Posterior vena cava (tissue), 2 donors: ENCODE measurements at regions of chr15 and their contacts with region 1.

Region 1: DNA sequence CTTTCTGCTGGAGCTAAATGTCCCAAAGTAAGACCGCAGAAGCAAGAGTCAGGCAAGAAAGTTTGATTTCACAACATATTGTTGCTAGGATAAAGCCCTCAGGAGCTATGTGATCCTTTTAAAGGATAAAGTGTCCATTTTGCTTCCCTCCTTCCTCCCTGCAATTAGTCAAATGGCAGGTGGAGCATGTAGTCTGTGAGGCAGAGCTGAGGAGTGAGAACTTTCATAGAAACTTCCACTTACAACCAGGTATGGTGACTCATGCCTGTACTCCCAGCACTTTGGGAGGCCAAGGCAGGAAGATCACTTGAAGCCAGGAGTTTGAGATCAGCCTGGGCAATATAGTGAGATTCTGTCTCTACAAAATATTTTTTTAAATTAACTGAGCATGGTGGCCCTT is 25.2 kb upstream of the RHCG start:
- DNase-seq: no peak

Region 2: DNA sequence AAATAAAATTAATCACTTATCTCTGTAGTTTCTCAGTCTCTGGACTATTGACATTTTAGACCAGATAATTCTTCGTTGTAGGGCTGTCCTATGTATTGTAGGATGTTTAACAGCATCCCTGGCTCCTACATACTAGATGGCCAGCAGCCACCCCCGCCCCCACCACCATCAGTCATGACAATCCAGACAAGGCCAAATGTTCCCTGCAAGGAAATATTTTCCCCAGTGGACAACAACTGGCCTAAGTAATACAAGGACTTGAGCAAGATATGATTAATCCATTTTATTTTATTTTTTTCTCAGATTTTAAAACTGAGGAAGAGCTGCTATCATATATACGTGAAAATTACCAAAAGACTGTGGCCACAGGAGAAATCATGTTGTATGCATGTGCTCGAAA is 77.4 kb after region 1 on chr15:
- intact Hi-C with region 1: no loop called
- DNase-seq: no peak

Region 3: GRCh38 chr15:89614164-89614563 is 92.6 kb after region 1 on chr15:
- intact Hi-C with region 1: no loop called
- DNase-seq: no peak

Region 4: DNA sequence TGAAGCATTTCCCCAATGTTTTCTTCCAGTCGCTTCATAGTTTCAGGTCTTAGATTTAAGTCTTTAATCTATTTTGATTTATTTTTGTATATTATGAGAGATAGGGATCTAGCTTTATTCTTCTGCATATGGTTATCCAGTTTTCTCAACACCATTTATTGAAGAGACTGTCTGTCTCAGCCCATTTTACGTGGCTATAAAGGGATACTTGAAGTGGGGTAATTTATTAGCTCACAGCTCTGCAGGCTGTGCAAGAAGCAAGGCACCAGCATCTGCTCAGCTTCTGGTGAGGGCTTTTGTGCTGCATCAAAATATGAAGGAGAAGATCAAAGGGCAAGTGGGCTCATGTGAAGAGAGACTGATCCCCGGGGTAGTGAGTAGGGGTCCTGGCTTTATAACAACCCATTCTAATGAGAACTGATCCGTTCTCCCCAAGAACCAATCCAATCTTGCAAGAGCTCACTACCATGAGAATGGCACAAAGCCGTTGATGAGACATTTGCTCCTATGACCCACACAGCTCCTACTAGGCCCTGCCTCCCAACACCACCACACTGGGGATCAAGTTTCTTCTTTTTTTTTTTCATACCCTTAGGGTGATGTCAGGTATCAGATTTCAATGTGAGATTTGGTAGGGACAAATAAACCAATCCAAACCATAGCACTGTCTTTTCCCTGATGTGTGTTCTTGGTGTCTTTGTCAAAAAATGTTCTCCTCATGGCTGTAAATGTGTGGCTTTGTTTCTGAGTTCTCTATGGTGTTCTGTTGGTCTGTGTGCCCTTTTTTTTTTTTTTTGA is 929.6 kb after region 1 on chr15:
- intact Hi-C with region 1: no loop called
- DNase-seq: no peak

Region 5: DNA sequence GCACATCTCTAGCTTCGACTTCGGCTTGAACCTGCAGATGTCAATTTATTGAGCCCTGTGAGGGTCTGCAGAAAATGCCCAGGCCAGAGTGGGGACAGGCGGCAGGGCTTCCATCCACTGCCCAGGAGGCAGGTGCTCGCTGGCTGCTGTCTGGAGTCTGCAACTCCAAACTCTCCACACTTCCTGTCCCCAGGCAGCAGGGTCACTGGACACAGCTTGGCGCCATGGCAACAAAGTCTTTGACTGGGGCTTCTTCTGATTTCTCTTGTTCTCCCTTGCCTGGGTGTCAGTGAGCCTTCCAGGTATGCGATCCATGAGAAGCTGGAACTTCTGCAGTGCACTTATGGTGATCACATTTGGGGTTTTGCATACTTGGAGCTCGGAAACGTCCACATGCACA is 1611.9 kb after region 1 on chr15:
- intact Hi-C with region 1: loop called in 1 of 2 experiments (anchors 5 kb)
- DNase-seq: no peak